ENCODE measurements at regions of chr5 and their contacts with region 1.

Region 1: GRCh38 chr5:163408311-163408923 is 29.0 kb upstream of the CCNG1 start:
- DNase-seq: peak; percentile 73
- H3K4me3 ChIP-seq: peak overlapping the region in 1 of 2 experiments; percentile 40; a peak in 1 of 4 replicates
- H3K27ac ChIP-seq: no peak overlapping the region
- H3K4me1 ChIP-seq: no peaks in the 10 kb centered on the region; a peak in 1 of 4 replicates
- H3K27me3 ChIP-seq: no peaks in the 10 kb centered on the region
- CTCF ChIP-seq: peak; percentile 97
- EP300 ChIP-seq: no peak
- RAD21 ChIP-seq: peak; percentile 89

Region 2: DNA sequence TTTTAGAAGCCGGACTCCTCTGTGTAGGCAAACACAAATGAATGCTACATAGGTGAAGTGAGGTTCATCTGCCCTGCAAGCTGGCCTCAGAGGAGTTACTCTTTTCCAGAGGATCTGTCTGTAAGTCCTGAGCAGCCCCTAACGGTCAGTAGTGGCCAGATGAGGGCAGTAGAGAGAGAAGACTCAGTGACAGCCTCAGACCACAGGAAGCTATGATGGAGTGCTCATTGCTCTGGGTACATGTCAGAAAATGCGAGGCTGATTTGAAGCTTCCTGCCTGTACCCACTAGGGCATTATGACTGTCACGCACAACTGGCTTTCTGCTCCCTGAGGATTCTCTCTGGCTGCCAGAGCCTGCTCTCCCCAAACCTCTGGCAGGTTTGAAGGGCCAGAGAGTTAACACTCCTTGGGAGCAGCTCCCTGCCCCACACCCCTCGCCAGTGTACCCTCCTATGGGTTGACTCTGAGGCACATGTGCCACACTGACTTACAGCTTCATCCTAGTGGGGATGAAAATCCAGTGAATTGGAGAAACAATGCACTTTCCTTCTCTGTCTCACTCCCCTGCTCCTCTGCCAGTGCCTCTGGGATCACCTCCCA is 1199.3 kb before region 1 on chr5:
- CTCF ChIA-PET with region 1: interaction called, 28 read pairs
- POLR2A ChIA-PET with region 1: no interaction called
- DNase-seq: peak; percentile 42
- H3K4me3 ChIP-seq: peak overlapping the region in 1 of 2 experiments; percentile 43; a peak in 1 of 4 replicates
- H3K27ac ChIP-seq: no peak overlapping the region
- H3K4me1 ChIP-seq: no peaks in the 10 kb centered on the region
- H3K27me3 ChIP-seq: no peaks in the 10 kb centered on the region
- CTCF ChIP-seq: peak; percentile 52
- EP300 ChIP-seq: no peak
- RAD21 ChIP-seq: peak; percentile 50

Region 3: GRCh38 chr5:163306421-163306820 is 102.0 kb before region 1 on chr5:
- CTCF ChIA-PET with region 1: interaction called, 39 read pairs
- POLR2A ChIA-PET with region 1: no interaction called
- DNase-seq: peak; percentile 16
- H3K4me3 ChIP-seq: no peak overlapping the region; a peak in 1 of 4 replicates
- H3K27ac ChIP-seq: no peak overlapping the region
- H3K4me1 ChIP-seq: no peaks in the 10 kb centered on the region
- H3K27me3 ChIP-seq: no peaks in the 10 kb centered on the region
- CTCF ChIP-seq: peak; percentile 57
- EP300 ChIP-seq: no peak
- RAD21 ChIP-seq: no peak; the same call in 1 of the 2 replicates

Region 4: GRCh38 chr5:163357636-163358035 is 50.8 kb before region 1 on chr5:
- CTCF ChIA-PET with region 1: interaction called, 13 read pairs
- POLR2A ChIA-PET with region 1: no interaction called
- DNase-seq: no peak
- H3K4me3 ChIP-seq: no peak overlapping the region
- H3K27ac ChIP-seq: no peak overlapping the region
- H3K4me1 ChIP-seq: peaks cover 0 to 5% of the 10 kb centered on the region in 2 experiments; a peak in 2 of 4 replicates
- H3K27me3 ChIP-seq: no peaks in the 10 kb centered on the region; the same call in 1 of the 2 replicates
- CTCF ChIP-seq: no peak
- EP300 ChIP-seq: no peak
- RAD21 ChIP-seq: no peak

Region 5: GRCh38 chr5:163381832-163382231 is 26.6 kb before region 1 on chr5:
- CTCF ChIA-PET with region 1: interaction called, 11 read pairs
- POLR2A ChIA-PET with region 1: no interaction called
- DNase-seq: no peak
- H3K4me3 ChIP-seq: no peak overlapping the region
- H3K27ac ChIP-seq: no peak overlapping the region
- H3K4me1 ChIP-seq: no peaks in the 10 kb centered on the region
- H3K27me3 ChIP-seq: no peaks in the 10 kb centered on the region
- CTCF ChIP-seq: no peak
- EP300 ChIP-seq: no peak
- RAD21 ChIP-seq: no peak

Region 6: GRCh38 chr5:163424836-163425235 is 16.4 kb after region 1 on chr5:
- CTCF ChIA-PET with region 1: interaction called, 14 read pairs
- POLR2A ChIA-PET with region 1: no interaction called
- DNase-seq: no peak
- H3K4me3 ChIP-seq: no peak overlapping the region
- H3K27ac ChIP-seq: no peak overlapping the region
- H3K4me1 ChIP-seq: no peaks in the 10 kb centered on the region
- H3K27me3 ChIP-seq: no peaks in the 10 kb centered on the region
- CTCF ChIP-seq: no peak
- EP300 ChIP-seq: no peak
- RAD21 ChIP-seq: no peak